ENCODE measurements at regions of chr22 and their contacts with region 1.

Region 1: DNA sequence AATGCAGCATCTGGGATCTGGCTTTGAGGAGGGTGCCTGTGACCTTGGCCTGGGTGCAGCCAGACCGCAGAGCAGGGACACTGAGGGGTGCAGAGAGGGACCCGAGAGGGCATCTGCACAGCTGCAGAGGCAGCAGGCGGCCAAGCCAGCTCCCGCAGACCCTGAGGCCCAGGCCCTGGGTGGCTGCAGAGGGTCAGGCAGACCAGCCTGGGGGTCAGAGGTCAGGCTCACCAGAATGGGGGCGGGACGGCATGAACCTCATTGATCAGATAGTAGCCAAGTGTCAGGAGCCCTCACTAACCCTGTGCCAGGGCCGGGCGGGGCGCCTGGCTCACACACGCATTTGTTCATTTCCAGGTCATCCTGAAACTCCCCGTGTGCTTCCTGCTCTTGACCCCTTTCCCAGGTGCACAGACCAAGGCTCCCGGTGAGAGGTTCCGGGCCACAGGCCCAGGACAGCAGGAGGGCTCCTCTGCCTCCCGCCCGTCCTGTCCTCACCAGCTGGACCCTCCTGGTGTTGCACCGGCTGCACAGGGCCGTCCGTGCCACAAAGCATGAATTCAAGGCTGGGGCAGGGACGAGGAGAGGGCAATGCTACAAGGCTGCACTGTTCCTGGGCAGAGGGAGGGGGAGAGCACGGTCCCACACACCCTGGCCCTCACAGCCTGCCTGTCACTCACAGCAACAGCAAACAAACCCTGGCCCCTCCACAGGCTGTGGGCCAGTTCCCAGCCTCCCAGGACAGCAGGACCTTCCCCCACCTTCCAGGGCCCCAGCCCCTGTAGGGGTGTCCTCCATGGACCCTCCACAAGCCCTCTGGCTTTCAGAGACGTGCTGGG is 3.3 kb downstream of the RTN4R start:
- DNase-seq: no peak
- H3K4me3 ChIP-seq: no peak overlapping the region
- H3K27ac ChIP-seq: no peak overlapping the region
- H3K4me1 ChIP-seq: peaks cover 0 to 3% (median 0%) of the 10 kb centered on the region in 3 donors
- H3K27me3 ChIP-seq: no peaks in the 10 kb centered on the region
- CTCF ChIP-seq: no peak

Region 2: DNA sequence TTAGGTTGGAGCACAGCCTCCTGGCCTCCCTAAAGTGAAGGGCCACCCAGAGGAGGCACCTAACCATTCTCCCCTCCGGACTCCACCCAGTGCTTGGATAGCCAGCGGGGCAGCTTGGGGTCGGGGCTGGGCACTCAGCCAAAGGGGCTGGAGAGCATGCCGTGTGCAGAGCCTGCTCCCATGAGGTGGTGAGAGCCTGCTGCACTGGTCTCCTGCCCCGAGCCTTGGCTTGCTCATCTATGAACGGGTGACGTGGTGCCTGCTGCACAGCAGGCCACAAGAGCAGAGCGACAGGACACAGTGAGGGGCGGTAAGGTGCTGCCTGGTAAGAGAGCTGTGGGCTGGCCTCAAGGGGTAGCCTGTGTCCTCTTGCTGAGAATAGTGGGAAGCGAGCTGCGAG is 100.0 kb before region 1 on chr22:
- intact Hi-C with region 1: loop called (anchors 5 kb)
- DNase-seq: no peak
- H3K4me3 ChIP-seq: no peak overlapping the region
- H3K27ac ChIP-seq: no peak overlapping the region
- H3K4me1 ChIP-seq: no peaks in the 10 kb centered on the region
- H3K27me3 ChIP-seq: no peaks in the 10 kb centered on the region
- CTCF ChIP-seq: no peak

Region 3: DNA sequence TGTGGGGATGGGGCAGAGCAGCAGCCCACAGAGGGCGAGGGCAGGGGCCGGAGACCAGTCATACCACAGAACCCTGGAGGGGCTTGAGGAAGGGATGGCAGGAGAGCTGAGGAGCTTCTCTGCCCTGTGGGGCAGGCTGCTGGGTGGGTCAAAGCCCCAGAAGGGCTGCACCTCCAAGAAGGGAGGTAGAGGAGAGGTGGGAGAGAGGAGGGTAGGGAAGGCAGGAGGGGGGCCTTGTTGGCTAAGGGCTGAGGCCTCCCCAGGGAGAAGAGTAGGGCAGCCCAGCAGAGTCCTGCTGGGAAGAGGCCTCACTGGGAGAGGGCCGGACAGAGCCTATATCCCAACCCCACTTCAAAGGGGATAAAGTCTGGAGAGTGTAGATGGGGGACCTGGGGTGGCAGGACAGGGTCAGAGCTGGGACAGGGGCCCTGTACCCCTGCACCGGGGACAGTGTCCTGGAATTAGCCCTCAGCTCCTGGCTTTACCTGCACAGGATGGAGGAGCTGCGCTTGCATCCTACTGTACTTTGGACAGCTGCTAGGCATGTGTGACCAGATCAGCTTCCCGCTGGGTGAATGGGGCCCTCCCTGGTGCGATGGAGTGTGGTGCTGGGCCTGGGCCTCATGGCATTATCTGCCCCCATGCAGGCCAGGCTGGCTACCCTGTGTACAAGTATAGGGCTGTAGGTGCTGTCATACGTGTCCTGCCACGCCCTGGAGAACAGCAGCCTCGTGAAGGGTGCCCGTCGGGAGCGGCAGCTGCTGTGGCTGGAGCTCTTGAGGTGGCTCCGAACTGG is 47.8 kb after region 1 on chr22:
- intact Hi-C with region 1: no loop called
- DNase-seq: peak in 3 of 5 donors; percentile 8 to 59 (median 47)
- H3K4me3 ChIP-seq: no peak overlapping the region
- H3K27ac ChIP-seq: no peak overlapping the region
- H3K4me1 ChIP-seq: peaks cover 0 to 3% (median 0%) of the 10 kb centered on the region in 3 donors
- H3K27me3 ChIP-seq: no peaks in the 10 kb centered on the region
- CTCF ChIP-seq: no peak

Measured in kidney (tissue), 22 donors.